ENCODE measurements at regions of chr15 and their contacts with region 1.

Region 1: DNA sequence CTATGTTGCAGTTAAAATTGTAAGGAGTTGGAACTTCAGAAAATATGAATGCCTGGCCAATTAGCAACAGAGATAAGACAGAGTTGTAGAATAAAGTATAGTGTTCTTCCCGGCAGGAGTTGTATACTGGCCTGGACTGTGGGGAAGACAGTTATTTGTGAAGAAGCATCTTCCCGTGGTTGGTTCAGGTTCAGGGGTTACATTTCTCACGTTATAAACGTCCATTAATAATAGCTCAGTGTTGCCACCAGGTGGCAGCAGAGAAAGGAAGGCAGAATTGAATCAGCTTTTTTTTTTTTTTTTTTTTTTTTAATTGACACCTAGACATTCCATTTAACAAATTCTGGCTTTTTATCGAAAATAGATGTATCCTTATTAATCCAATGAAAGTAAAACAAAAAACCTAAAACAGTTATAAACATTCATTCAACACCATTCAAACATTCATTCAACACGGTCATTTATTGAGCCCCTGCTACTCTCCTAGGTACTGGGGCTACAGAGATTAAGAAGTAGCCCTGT is 66.4 kb upstream of the NR2E3 start:
- DNase-seq: peak; percentile 17
- H3K4me3 Mint-ChIP-seq: no peak overlapping the region
- H3K27ac Mint-ChIP-seq: no peak overlapping the region
- H3K4me1 Mint-ChIP-seq: no peaks in the 10 kb centered on the region
- H3K27me3 Mint-ChIP-seq: peaks cover 4% of the 10 kb centered on the region

Region 2: DNA sequence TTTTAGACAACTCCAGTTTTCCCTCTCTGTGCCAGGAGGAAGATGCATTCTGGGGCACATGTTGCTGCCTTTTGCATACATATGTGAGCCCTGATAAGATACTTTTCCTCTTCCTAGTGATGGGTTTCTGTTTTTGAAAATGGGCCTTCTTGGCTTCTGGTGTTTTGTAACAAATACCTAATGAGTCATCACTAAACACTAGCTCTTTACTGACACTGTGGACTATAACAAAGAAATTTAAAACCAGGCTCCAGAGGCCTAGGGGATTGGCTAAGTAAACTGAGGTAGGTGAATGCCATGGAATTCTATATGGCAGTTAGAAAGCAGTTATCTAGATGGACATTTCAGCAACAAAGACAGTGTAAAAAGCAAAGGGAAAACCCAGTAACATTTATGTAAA is 26.9 kb before region 1 on chr15:
- intact Hi-C with region 1: no loop called
- DNase-seq: no peak
- H3K4me3 Mint-ChIP-seq: no peak overlapping the region
- H3K27ac Mint-ChIP-seq: no peak overlapping the region
- H3K4me1 Mint-ChIP-seq: peaks cover 6% of the 10 kb centered on the region
- H3K27me3 Mint-ChIP-seq: peaks cover 19% of the 10 kb centered on the region

Region 3: DNA sequence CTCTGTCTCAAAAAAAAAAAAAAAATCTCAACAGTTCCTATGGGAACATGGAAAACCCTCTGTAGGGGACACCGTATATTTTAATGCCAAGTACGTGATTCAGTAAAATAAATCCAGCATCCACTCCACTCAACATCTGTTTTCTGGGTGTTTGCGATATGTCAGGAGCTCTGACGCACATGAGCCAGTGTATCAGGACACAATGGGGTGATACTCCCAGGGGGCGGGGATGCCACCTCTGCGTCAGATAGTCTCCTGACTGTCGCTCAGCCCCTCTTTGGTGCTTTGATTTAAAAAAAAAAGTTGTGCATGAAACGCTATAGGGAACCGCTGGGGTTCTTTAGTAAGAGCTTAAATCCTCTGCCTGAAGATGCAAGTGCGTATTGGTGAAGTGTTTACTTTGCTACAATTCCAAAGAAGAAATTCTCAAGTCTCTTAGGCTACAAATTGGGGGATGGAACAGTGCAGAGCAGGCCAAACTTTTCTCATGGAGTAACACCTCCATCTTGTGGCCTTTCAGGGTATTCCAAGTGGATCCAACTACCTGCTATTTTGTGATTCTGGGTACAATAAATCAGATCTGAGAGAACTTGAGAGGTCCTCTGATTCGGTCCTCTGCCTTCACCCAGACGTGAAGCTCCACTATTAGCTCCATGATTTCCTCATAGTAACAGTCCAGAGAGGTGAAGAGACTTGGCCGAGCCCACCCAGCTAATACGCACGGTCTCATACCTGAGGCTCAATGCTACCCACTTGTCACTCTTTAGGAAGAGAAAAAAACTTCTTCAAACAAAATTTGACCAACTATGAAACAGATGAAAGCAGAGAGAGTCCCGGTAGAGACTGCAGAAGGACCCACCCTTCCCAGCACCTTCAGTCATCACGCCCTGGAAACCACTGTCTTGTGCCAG is 57.2 kb after region 1 on chr15:
- intact Hi-C with region 1: loop called (anchors 1 kb)
- DNase-seq: no peak
- H3K4me3 Mint-ChIP-seq: no peak overlapping the region
- H3K27ac Mint-ChIP-seq: no peak overlapping the region
- H3K4me1 Mint-ChIP-seq: no peaks in the 10 kb centered on the region
- H3K27me3 Mint-ChIP-seq: peaks cover 4% of the 10 kb centered on the region